Activated CD4-positive, alpha-beta T cell treated with anti-CD3 and anti-CD28 coated beads, Interleukin-2, amount 10 ng/mL, durations not matched to agents 24 days and 14 days (primary cell): ENCODE measurements at regions of chr9 and their contacts with region 1.

Region 1: GRCh38 chr9:6055213-6055612 is 39.8 kb upstream of the RANBP6 start:
- DNase-seq: peak; percentile 89
- H3K4me3 Mint-ChIP-seq: no peak overlapping the region
- H3K27ac Mint-ChIP-seq: no peak overlapping the region
- H3K4me1 Mint-ChIP-seq: peaks cover 8% of the 10 kb centered on the region
- H3K27me3 Mint-ChIP-seq: peaks cover 29% of the 10 kb centered on the region

Region 2: GRCh38 chr9:5799314-5799713 is 255.9 kb before region 1 on chr9:
- intact Hi-C with region 1: loop called (anchors 5 kb)
- DNase-seq: peak; percentile 63
- H3K4me3 Mint-ChIP-seq: no peak overlapping the region
- H3K27ac Mint-ChIP-seq: no peak overlapping the region
- H3K4me1 Mint-ChIP-seq: peaks cover 14% of the 10 kb centered on the region
- H3K27me3 Mint-ChIP-seq: no peaks in the 10 kb centered on the region

Region 3: GRCh38 chr9:5971740-5972139 is 83.5 kb before region 1 on chr9:
- intact Hi-C with region 1: no loop called
- DNase-seq: no peak
- H3K4me3 Mint-ChIP-seq: no peak overlapping the region
- H3K27ac Mint-ChIP-seq: peak overlapping the region; percentile 30
- H3K4me1 Mint-ChIP-seq: peaks cover 12% of the 10 kb centered on the region
- H3K27me3 Mint-ChIP-seq: no peaks in the 10 kb centered on the region

Region 4: DNA sequence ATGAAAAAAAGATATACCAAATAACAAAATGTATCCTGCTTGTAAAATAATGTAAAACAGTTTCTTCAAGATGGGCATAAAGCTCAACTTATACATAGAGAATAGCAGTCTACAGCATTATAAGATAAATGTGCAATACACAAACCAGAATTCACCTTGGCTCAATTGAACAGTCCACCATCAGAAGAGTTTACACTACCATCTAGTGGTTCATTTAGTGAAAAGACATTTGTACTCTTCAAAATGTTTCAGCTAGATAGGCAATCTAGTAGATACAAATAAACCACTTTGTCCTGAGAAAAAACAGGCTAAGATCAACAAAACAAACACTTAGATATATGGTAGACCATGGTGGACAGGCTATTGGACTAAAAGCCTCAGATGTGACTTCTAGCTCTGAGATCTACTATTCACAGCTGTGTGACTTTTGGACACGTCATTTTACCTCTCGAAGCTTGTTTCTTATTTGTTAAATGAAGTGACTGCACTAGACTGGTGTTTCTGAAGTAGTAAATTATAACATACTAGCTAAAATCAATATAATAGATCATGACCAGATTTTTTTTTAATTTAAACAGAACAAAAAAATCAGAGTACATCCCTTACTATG is 250.8 kb after region 1 on chr9:
- intact Hi-C with region 1: loop called (anchors 1 kb)
- DNase-seq: no peak
- H3K4me3 Mint-ChIP-seq: no peak overlapping the region
- H3K27ac Mint-ChIP-seq: no peak overlapping the region
- H3K4me1 Mint-ChIP-seq: no peaks in the 10 kb centered on the region
- H3K27me3 Mint-ChIP-seq: peaks cover 24% of the 10 kb centered on the region

Region 5: GRCh38 chr9:6566409-6567139 is 511.4 kb after region 1 on chr9:
- intact Hi-C with region 1: loop called (anchors 1 kb)
- DNase-seq: peak; percentile 81
- H3K4me3 Mint-ChIP-seq: peak overlapping the region; percentile 73
- H3K27ac Mint-ChIP-seq: peak overlapping the region; percentile 83
- H3K4me1 Mint-ChIP-seq: peaks cover 15% of the 10 kb centered on the region
- H3K27me3 Mint-ChIP-seq: peaks cover 6% of the 10 kb centered on the region